Uterus (tissue), 4 donors: ENCODE measurements at regions of chr16 and their contacts with region 1.

Region 1: GRCh38 chr16:6672507-6672906 is 660.1 kb upstream of the RBFOX1 start:
- DNase-seq: no peak
- H3K4me3 ChIP-seq: no peak overlapping the region
- H3K27ac ChIP-seq: no peak overlapping the region
- H3K4me1 ChIP-seq: no peaks in the 10 kb centered on the region
- H3K27me3 ChIP-seq: no peaks in the 10 kb centered on the region
- CTCF ChIP-seq: no peak
- POLR2A ChIP-seq: no peak

Region 2: DNA sequence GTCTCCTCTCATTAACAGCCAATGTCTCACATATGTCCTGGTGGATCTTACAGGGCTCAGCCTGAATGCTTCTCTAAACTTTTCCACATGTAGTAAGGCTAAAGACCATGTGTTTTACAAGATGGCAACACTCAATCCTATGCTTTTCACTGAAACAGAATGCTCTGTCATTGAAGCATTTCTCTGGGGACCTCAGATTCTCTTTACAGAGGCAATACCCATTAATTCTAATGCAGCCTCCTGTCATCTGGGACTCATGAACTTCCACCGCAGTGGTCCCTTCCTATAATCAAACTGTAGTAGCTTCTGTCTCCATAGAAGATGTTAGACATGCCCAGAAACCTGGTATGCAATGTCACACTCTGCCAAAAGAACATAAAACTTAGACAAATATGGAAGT is 266.5 kb before region 1 on chr16:
- intact Hi-C with region 1: loop called (anchors 10 kb)
- DNase-seq: no peak
- H3K4me3 ChIP-seq: no peak overlapping the region
- H3K27ac ChIP-seq: no peak overlapping the region
- H3K4me1 ChIP-seq: no peaks in the 10 kb centered on the region
- H3K27me3 ChIP-seq: no peaks in the 10 kb centered on the region
- CTCF ChIP-seq: no peak
- POLR2A ChIP-seq: no peak

Region 3: GRCh38 chr16:7167626-7168025 is 495.1 kb after region 1 on chr16:
- intact Hi-C with region 1: no loop called
- DNase-seq: no peak
- H3K4me3 ChIP-seq: no peak overlapping the region
- H3K27ac ChIP-seq: no peak overlapping the region
- H3K4me1 ChIP-seq: no peaks in the 10 kb centered on the region
- H3K27me3 ChIP-seq: no peaks in the 10 kb centered on the region
- CTCF ChIP-seq: no peak
- POLR2A ChIP-seq: no peak

Region 4: GRCh38 chr16:7209598-7209997 is 537.1 kb after region 1 on chr16:
- intact Hi-C with region 1: no loop called
- DNase-seq: no peak
- H3K4me3 ChIP-seq: no peak overlapping the region
- H3K27ac ChIP-seq: no peak overlapping the region
- H3K4me1 ChIP-seq: no peaks in the 10 kb centered on the region
- H3K27me3 ChIP-seq: no peaks in the 10 kb centered on the region
- CTCF ChIP-seq: no peak
- POLR2A ChIP-seq: no peak